GM12878 (cell line): ENCODE measurements at regions of chr7 and their contacts with region 1.

Region 1: GRCh38 chr7:23712368-23713284 is 2.6 kb downstream of the STK31 start:
- DNase-seq: peak; percentile 3
- ATAC-seq: peak; percentile 62
- H3K4me3 ChIP-seq: no peak overlapping the region
- H3K27ac ChIP-seq: no peak overlapping the region
- H3K4me1 ChIP-seq: no peaks in the 10 kb centered on the region
- H3K27me3 ChIP-seq: no peaks in the 10 kb centered on the region
- CTCF ChIP-seq: peak; percentile 22 to 70 (median 27); a peak in 4 of 6 replicates
- EP300 ChIP-seq: no peak
- POLR2A ChIP-seq: no peak
- RAD21 ChIP-seq: peak; percentile 98

Region 2: DNA sequence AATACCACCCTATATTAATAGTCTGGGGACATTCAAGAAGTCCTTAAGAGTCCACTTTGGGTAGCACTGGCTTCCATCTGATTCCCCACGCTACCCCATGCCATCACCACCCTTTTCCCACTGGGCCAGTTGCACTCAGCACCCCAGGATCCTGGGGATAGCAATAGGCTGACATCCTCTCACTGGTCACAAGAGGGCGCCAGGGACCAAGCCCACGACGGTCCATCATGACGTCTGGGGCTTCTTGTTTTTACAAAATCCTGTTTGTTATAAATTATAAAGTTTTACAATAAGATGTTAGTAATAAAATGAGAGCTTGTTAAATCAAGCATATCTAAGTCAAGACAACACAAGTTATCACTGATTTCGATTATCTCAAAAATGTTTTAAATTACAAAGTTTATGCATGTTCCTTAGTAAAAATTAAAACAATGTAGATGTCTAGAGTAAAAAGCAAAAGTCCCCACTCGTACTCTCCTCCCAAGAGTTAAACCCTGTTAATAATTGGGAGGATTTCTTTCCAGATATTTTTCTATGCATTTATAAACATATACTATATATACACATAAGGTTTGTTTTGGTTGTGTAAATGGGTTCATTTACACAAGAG is 450.7 kb before region 1 on chr7:
- CTCF ChIA-PET with region 1: interaction called, 3 read pairs
- POLR2A ChIA-PET with region 1: no interaction called
- RAD21 ChIA-PET with region 1: interaction called, 11 read pairs
- SMC1A ChIA-PET with region 1: no interaction called
- in situ Hi-C with region 1: no loop called
- intact Hi-C with region 1: no loop called
- DNase-seq: no peak
- ATAC-seq: peak; percentile 95
- H3K4me3 ChIP-seq: no peak overlapping the region
- H3K27ac ChIP-seq: no peak overlapping the region
- H3K4me1 ChIP-seq: peaks cover 11% of the 10 kb centered on the region
- H3K27me3 ChIP-seq: no peaks in the 10 kb centered on the region; a peak in 1 of 4 replicates
- CTCF ChIP-seq: peak; percentile 83 to 94 (median 86)
- EP300 ChIP-seq: no peak
- POLR2A ChIP-seq: no peak
- RAD21 ChIP-seq: peak; percentile 87

Region 3: DNA sequence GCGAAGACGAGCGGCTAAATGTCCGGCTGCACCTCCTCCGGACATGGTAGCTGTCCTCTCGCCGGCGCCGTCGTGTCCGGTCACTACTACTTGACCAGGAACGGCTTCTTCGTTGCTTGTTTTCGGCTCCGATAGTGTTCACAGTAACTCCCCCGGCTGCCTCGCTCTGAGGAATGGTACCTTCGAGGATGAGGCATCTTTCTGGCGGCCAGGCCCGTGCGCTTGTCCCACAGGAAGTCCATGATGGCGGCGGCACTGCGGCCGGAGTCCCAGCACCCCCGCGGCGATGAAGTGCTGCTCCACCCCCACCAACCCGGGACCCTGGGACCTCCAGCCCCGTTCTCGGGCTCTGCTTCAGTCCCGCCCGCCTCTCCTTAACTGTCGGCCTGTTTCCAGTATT is 126.5 kb before region 1 on chr7:
- CTCF ChIA-PET with region 1: no interaction called
- POLR2A ChIA-PET with region 1: no interaction called
- RAD21 ChIA-PET with region 1: no interaction called
- SMC1A ChIA-PET with region 1: interaction called, 10 read pairs
- in situ Hi-C with region 1: no loop called
- intact Hi-C with region 1: no loop called
- DNase-seq: no peak
- ATAC-seq: no peak
- H3K4me3 ChIP-seq: no peak overlapping the region
- H3K27ac ChIP-seq: no peak overlapping the region
- H3K4me1 ChIP-seq: no peaks in the 10 kb centered on the region
- H3K27me3 ChIP-seq: no peaks in the 10 kb centered on the region
- CTCF ChIP-seq: no peak
- EP300 ChIP-seq: no peak
- POLR2A ChIP-seq: no peak
- RAD21 ChIP-seq: no peak

Region 4: DNA sequence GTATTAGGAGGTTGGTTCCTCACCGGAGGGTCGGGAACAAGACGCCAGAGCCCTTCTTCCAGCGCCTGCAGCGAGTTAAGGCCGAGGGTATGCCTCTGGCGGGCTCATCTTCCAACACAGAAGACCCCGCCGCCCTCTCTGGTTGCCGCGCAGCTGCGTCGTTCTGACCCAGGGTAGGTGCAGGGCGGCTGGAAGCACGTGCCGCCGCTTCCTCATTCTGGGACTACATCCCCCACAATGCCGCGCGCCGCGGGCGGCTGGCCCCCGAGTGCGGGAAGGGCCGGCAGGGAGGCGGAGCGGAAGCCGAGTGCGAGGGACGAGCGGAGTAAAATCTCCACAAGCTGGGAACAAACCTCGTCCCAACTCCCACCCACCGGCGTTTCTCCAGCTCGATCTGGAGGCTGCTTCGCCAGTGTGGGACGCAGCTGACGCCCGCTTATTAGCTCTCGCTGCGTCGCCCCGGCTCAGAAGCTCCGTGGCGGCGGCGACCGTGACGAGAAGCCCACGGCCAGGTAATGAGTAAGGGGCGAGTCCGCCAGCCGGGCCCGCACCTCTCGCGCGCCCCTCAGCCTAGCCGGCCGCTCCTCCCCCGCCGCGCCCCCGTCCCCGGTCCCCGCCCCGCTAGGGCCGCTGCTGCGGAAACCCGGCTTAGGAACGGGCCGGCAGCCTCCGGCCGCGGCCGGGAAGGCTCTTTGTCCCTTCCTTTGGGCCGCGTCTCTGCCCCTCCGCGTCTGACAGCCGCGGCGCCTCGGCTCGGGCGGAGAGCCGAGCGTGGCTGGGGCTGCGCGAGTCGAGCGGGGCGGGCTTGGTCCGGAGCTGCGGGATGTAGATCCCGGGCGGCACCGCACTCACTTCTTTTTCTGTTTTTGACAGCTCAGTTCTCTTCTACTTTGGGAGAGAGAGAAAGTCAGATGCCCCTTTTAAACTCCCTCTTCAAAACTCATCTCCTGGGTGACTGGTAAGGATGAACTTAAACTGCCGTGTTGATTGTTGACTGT is 115.2 kb before region 1 on chr7 and contains the start of gene CCDC126:
- CTCF ChIA-PET with region 1: interaction called, 10 read pairs
- POLR2A ChIA-PET with region 1: no interaction called
- RAD21 ChIA-PET with region 1: interaction called, 3 read pairs
- SMC1A ChIA-PET with region 1: no interaction called
- in situ Hi-C with region 1: no loop called
- intact Hi-C with region 1: no loop called
- DNase-seq: peak; percentile 57
- ATAC-seq: peak; percentile 77
- H3K4me3 ChIP-seq: peak within 1 kb of the TSS; percentile 76
- H3K27ac ChIP-seq: peak within 1 kb of the TSS; percentile 92
- H3K4me1 ChIP-seq: peaks cover 32% of the 10 kb centered on the region
- H3K27me3 ChIP-seq: no peaks in the 10 kb centered on the region
- CTCF ChIP-seq: no peak
- EP300 ChIP-seq: no peak
- POLR2A ChIP-seq: peak; percentile 74
- RAD21 ChIP-seq: no peak
- polyA plus RNA-seq, gene CCDC126: 34.3 to 49.9 TPM